Activated T-helper 2 cell treated with anti-CD3 and anti-CD28 coated beads, Interferon-gamma antibody, Interleukin-2, Interleukin-4, amounts not matched to agents 10 μg/mL and 5 μg/mL and 100 μg/mL, durations not matched to agents 14 hours and 24 hours and 36 hours (primary cell): ENCODE measurements at regions of chr1 and their contacts with region 1.

Region 1: DNA sequence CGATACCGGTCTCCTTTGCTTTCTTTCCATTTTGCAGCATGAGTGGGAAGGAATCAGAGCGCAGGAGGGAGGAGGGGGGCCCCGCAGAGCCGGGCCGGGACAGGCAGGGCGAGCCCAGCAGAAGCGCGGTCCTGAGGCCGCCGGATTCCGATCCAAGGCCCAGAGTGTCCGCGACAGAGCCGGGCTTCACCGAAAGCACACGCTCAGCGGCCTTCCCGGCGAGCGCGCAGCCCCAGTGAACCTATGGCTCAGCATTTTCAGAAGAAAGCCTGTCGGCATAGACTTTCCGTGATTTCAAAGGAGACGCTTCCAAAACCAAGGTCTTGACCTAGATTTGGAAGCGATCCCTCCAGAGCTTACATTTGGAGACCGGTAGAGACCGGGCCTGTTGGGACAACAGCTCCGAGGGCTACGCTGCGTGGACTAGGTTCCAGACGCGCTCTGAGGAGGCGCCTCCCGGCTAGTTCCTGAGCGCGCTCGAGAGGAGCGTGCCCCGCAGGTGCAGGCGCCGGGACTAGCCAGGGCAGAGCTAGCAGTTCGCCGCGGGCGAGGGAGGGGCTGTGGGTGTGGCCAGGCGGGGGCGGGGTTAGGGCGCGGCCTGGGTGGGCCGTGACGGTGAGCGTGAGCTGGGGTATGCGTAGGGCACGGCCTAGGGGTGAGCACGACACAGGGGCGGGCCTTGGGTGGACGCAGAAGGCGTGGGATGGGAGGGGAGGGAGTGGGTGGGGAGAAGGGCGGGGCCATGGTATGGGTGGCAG is 27.8 kb upstream of the PRSS38 start:
- DNase-seq: peak; percentile 89
- H3K4me3 Mint-ChIP-seq: peak overlapping the region; percentile 71
- H3K27ac Mint-ChIP-seq: no peak overlapping the region
- H3K4me1 Mint-ChIP-seq: peaks cover 5% of the 10 kb centered on the region
- H3K27me3 Mint-ChIP-seq: peaks cover 2% of the 10 kb centered on the region

Region 2: GRCh38 chr1:227542143-227543120 is 245.3 kb before region 1 on chr1:
- intact Hi-C with region 1: loop called (anchors 5 kb)
- DNase-seq: peak; percentile 83
- H3K4me3 Mint-ChIP-seq: peak overlapping the region; percentile 49
- H3K27ac Mint-ChIP-seq: peak overlapping the region; percentile 42
- H3K4me1 Mint-ChIP-seq: peaks cover 4% of the 10 kb centered on the region
- H3K27me3 Mint-ChIP-seq: peaks cover 6% of the 10 kb centered on the region

Region 3: DNA sequence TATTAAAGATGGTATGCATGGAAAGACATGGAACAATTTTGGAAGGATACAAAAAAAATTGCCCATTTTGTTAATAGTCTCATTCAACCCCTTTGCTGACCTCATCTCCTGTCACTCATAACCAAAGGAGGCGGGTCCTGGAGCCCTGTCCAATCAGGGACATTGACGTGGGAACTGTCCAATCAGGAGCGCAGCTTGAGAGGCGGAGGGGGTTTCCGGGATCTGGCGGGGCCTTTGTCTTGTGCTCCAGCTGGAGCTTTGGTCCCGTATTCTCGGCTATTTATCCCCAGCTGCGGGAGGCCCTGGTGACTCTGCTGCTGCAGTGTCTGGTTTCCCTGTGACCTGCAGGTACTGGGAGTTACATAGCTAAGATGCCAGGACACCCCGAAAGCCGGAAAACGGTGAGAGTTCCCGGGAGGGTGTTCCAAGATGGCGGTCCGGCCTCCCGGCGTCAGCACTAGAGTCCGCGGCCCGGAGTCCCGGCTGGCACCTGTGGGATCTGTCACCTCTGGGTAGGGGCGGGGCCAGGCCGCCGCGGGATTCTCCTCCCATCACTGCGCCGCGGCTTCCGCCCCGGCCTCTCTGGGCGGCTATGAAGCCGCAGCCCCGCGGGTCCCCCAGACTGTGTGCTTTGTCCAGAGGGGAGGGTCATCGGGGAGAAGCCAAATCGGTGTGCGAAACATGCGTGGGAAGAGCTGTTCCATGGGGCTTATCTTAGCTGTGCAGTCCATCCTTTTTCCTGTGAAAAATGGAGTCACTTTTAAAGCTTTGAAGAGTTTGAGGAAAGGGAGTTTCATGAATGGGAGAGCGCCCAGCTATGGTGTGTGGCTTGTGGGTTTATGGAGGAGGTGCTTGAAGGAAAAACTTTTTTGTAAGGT is 224.1 kb before region 1 on chr1 and contains the start of gene ZNF678:
- intact Hi-C with region 1: loop called (anchors 1 kb)
- DNase-seq: peak; percentile 81
- H3K4me3 Mint-ChIP-seq: peak within 1 kb of the TSS; percentile 87
- H3K27ac Mint-ChIP-seq: peak within 1 kb of the TSS; percentile 87
- H3K4me1 Mint-ChIP-seq: peaks cover 13% of the 10 kb centered on the region
- H3K27me3 Mint-ChIP-seq: peaks cover 24% of the 10 kb centered on the region
- total RNA-seq, gene ZNF678: 5.1 and 5.7 TPM in 2 replicates

Region 4: DNA sequence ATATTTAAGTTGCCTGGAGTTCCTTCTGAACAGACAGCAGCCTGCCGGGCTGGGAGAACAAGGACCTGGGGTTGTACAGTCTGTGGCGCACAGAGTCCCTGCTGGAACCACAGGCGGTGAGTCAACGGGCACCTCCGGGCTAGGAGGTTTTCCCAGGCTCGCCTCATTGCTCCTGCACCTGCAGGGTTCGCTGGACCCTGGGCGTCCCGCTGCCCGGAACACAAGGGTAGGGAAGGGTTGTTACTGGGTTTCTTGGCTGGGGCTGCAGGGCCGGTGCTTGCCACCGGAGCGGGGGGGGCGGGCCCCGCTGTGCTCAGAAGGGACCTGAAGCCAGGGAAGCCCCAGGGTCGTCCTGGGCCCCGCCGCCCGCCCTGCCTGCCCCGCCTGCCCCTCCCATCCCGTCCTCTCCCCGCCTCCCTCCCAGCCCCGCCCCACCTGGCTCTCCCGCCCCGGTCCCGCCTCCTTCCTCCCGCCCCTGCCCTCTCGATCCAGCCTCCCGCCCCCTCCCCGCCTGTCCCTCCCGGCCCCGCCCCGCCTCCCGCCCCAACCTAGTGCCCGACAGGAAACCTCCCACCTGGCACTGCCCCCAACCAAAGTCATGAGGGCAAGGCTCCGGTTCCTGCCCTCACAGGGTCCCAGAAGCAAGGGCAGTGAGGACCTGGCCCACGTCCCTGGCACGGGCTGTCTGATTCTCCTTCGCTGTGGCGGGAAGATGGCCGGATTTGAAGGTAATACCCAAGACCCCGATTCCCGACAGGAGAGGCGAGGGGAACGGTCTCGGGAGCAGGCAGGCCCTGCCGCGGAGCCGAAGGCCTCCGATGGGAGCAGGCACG is 59.4 kb before region 1 on chr1:
- intact Hi-C with region 1: loop called (anchors 1 kb)
- DNase-seq: peak; percentile 39
- H3K4me3 Mint-ChIP-seq: peak overlapping the region; percentile 82
- H3K27ac Mint-ChIP-seq: peak overlapping the region; percentile 9
- H3K4me1 Mint-ChIP-seq: peaks cover 6% of the 10 kb centered on the region
- H3K27me3 Mint-ChIP-seq: no peaks in the 10 kb centered on the region

Region 5: GRCh38 chr1:227734856-227735538 is 52.7 kb before region 1 on chr1 and contains the starts of genes JMJD4 and SNAP47:
- intact Hi-C with region 1: loop called (anchors 1 kb)
- DNase-seq: peak; percentile 92
- H3K4me3 Mint-ChIP-seq: peak within 1 kb of the TSS; percentile 96
- H3K27ac Mint-ChIP-seq: peak within 1 kb of the TSS; percentile 93
- H3K4me1 Mint-ChIP-seq: peaks cover 23% of the 10 kb centered on the region
- H3K27me3 Mint-ChIP-seq: no peaks in the 10 kb centered on the region
- total RNA-seq, gene JMJD4: 26.6 and 27.5 TPM in 2 replicates
- total RNA-seq, gene SNAP47: 28.4 and 29.3 TPM in 2 replicates